CD14-positive monocyte (primary cell): ENCODE measurements at regions of chr17 and their contacts with region 1.

Region 1: GRCh38 chr17:1095090-1095852 is 84.5 kb downstream of the ABR start:
- DNase-seq: peak; percentile 86 to 97 (median 90)
- H3K4me3 ChIP-seq: peak overlapping the region in 1 of 3 experiments; percentile 61
- H3K4me3 Mint-ChIP-seq: peak overlapping the region; percentile 48 to 73
- H3K27ac ChIP-seq: peak overlapping the region; percentile 97 to 99
- H3K27ac Mint-ChIP-seq: peak overlapping the region; percentile 98 to 99 (median 99)
- H3K4me1 ChIP-seq: peaks cover 61 to 71% of the 10 kb centered on the region in 2 donors
- H3K4me1 Mint-ChIP-seq: peaks cover 67% of the 10 kb centered on the region
- H3K27me3 ChIP-seq: no peaks in the 10 kb centered on the region
- H3K27me3 Mint-ChIP-seq: peaks cover 0 to 4% (median 3%) of the 10 kb centered on the region in 3 donors
- CTCF ChIP-seq: no peak

Region 2: GRCh38 chr17:1055751-1056645 is 39.3 kb before region 1 on chr17:
- intact Hi-C with region 1: no loop called
- DNase-seq: peak; percentile 32 to 45 (median 40)
- H3K4me3 ChIP-seq: no peak overlapping the region
- H3K4me3 Mint-ChIP-seq: no peak overlapping the region
- H3K27ac ChIP-seq: peak overlapping the region in 1 of 2 donors; percentile 45
- H3K27ac Mint-ChIP-seq: peak overlapping the region in 2 of 7 donors; percentile 53 to 74
- H3K4me1 ChIP-seq: no peaks in the 10 kb centered on the region
- H3K4me1 Mint-ChIP-seq: peaks cover 2% of the 10 kb centered on the region
- H3K27me3 ChIP-seq: no peaks in the 10 kb centered on the region
- H3K27me3 Mint-ChIP-seq: peaks cover 0 to 1% (median 0%) of the 10 kb centered on the region in 3 donors
- CTCF ChIP-seq: peak; percentile 89

Region 3: GRCh38 chr17:1110862-1111598 is 15.8 kb after region 1 on chr17:
- intact Hi-C with region 1: loop called in 1 of 2 experiments (anchors 1 kb)
- DNase-seq: peak; percentile 91 to 99 (median 93)
- H3K4me3 ChIP-seq: peak overlapping the region in 1 of 3 experiments; percentile 89
- H3K4me3 Mint-ChIP-seq: peak overlapping the region; percentile 67 to 85
- H3K27ac ChIP-seq: peak overlapping the region; percentile 93 to 98
- H3K27ac Mint-ChIP-seq: peak overlapping the region; percentile 95 to 99 (median 98)
- H3K4me1 ChIP-seq: peaks cover 75 to 92% of the 10 kb centered on the region in 2 donors
- H3K4me1 Mint-ChIP-seq: peaks cover 83% of the 10 kb centered on the region
- H3K27me3 ChIP-seq: no peaks in the 10 kb centered on the region
- H3K27me3 Mint-ChIP-seq: peaks cover 0 to 7% (median 0%) of the 10 kb centered on the region in 3 donors
- CTCF ChIP-seq: no peak

Region 4: GRCh38 chr17:1331708-1332107 is 236.4 kb after region 1 on chr17:
- intact Hi-C with region 1: no loop called
- DNase-seq: no peak
- H3K4me3 ChIP-seq: no peak overlapping the region
- H3K4me3 Mint-ChIP-seq: peak overlapping the region in 1 of 2 donors; percentile 49
- H3K27ac ChIP-seq: no peak overlapping the region
- H3K27ac Mint-ChIP-seq: peak overlapping the region in 1 of 7 donors; percentile 47
- H3K4me1 ChIP-seq: no peaks in the 10 kb centered on the region
- H3K4me1 Mint-ChIP-seq: peaks cover 3% of the 10 kb centered on the region
- H3K27me3 ChIP-seq: peaks cover 0 to 3% of the 10 kb centered on the region in 2 donors
- H3K27me3 Mint-ChIP-seq: peaks cover 16 to 32% (median 26%) of the 10 kb centered on the region in 3 donors
- CTCF ChIP-seq: no peak

Region 5: GRCh38 chr17:1474402-1475189 is 379.3 kb after region 1 on chr17:
- intact Hi-C with region 1: no loop called
- DNase-seq: no peak
- H3K4me3 ChIP-seq: no peak overlapping the region
- H3K4me3 Mint-ChIP-seq: no peak overlapping the region
- H3K27ac ChIP-seq: no peak overlapping the region
- H3K27ac Mint-ChIP-seq: no peak overlapping the region
- H3K4me1 ChIP-seq: peaks cover 5 to 6% of the 10 kb centered on the region in 2 donors
- H3K4me1 Mint-ChIP-seq: peaks cover 10% of the 10 kb centered on the region
- H3K27me3 ChIP-seq: peaks cover 0 to 29% of the 10 kb centered on the region in 2 donors
- H3K27me3 Mint-ChIP-seq: peaks cover 33 to 59% (median 40%) of the 10 kb centered on the region in 3 donors
- CTCF ChIP-seq: no peak